Activated T-helper 2 cell treated with anti-CD3 and anti-CD28 coated beads, Interferon-gamma antibody, Interleukin-2, Interleukin-4, amounts not matched to agents 10 μg/mL and 5 μg/mL and 100 μg/mL, durations not matched to agents 14 hours and 24 hours and 36 hours (primary cell): ENCODE measurements at regions of chr2 and their contacts with region 1.

Region 1: GRCh38 chr2:200319548-200320337 is 13.2 kb downstream of the SPATS2L start:
- DNase-seq: no peak
- H3K4me3 Mint-ChIP-seq: no peak overlapping the region
- H3K27ac Mint-ChIP-seq: no peak overlapping the region
- H3K4me1 Mint-ChIP-seq: peaks cover 73% of the 10 kb centered on the region
- H3K27me3 Mint-ChIP-seq: no peaks in the 10 kb centered on the region

Region 2: DNA sequence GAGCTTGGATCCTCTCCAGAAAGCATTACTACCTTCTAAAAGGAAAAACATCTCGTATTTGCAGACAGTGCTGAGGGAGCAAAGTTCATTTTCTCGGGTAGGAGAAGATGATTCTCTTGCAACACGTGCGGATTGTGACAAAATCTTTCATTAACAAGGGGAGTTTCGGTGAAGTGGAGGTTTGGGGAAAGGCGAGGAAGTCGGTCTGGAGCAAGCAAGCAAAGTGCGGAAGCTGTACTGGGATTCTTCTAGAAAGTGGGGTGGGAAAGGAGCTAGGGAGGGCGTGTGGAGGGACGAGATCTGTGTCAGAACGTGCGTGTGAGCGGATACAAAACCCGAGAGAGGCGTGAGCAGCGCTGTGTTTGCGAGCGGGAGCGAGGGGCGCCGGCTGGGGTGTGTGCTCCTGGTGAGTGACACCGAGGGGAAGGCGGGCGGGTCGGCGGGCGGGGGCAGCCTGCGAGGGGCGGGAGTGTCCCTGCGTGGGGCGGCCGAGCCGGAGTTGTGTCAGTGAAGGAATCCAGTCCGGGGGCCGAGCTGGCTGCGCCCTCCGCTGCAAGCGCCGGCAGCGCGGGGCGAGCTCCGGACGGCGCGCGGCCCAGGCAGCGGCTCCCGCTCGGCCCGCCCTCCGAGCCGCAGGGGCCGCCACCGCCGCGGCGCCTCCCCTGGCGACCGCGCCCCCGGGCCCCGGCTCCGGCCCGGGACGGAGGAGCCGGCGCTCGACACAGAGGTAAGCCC is 13.4 kb before region 1 on chr2 and contains the start of gene SPATS2L:
- intact Hi-C with region 1: loop called (anchors 1 kb)
- DNase-seq: peak; percentile 48
- H3K4me3 Mint-ChIP-seq: peak within 1 kb of the TSS; percentile 92
- H3K27ac Mint-ChIP-seq: peak within 1 kb of the TSS; percentile 91
- H3K4me1 Mint-ChIP-seq: peaks cover 40% of the 10 kb centered on the region
- H3K27me3 Mint-ChIP-seq: peaks cover 12% of the 10 kb centered on the region
- total RNA-seq, gene SPATS2L: 57.5 and 62.2 TPM in 2 replicates

Region 3: GRCh38 chr2:200373973-200374416 is 54.3 kb after region 1 on chr2:
- intact Hi-C with region 1: loop called (anchors 1 kb)
- DNase-seq: peak; percentile 33
- H3K4me3 Mint-ChIP-seq: peak overlapping the region; percentile 76
- H3K27ac Mint-ChIP-seq: peak overlapping the region; percentile 74
- H3K4me1 Mint-ChIP-seq: peaks cover 51% of the 10 kb centered on the region
- H3K27me3 Mint-ChIP-seq: no peaks in the 10 kb centered on the region

Region 4: DNA sequence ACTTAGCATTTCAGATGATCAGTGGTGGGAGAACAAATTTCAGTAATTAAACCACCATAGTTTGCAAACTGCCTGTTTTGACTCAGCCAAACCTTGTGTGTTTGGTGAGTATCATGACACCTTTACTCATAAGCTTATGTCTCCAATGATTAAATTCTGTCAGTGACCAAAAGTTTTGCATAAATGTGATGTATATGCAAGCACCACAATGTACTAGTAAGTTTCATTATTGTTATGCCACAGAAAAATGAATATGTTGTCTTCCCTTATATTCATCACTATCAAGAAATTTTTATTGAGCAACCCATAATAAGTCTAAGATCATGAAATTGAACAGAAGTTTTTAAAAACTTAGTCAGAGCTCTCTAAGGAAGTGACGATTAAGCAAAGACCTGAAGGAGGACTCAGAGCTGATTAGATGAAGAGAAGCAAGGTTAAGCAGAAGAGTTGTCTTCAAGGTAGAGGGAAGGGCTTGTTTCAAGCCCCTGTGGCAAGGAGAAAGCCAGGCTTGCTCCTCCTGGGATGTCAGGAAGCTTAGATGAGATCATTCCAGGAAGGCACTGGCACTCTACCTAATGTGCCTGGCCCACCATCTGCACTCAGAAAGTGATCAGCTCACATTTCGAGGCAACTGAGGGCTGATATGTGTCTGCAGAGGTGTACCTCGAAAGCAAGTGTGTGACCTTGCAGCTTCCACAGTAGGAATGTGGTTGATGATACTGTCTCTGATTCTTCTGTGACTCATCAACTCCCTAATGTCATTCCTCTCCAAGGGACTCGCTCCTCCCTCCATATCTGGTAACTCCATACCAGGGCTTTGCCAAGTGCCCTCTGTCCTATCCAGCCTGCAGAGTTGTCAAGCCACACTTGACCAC is 135.4 kb after region 1 on chr2:
- intact Hi-C with region 1: loop called (anchors 1 kb)
- DNase-seq: no peak
- H3K4me3 Mint-ChIP-seq: no peak overlapping the region
- H3K27ac Mint-ChIP-seq: peak overlapping the region; percentile 61
- H3K4me1 Mint-ChIP-seq: peaks cover 33% of the 10 kb centered on the region
- H3K27me3 Mint-ChIP-seq: no peaks in the 10 kb centered on the region

Region 5: GRCh38 chr2:200585730-200586643 is 266.2 kb after region 1 on chr2 and contains the start of gene AOX1:
- intact Hi-C with region 1: no loop called
- DNase-seq: peak; percentile 12
- H3K4me3 Mint-ChIP-seq: peak within 1 kb of the TSS; percentile 67
- H3K27ac Mint-ChIP-seq: no peak within 1 kb of the TSS
- H3K4me1 Mint-ChIP-seq: peaks cover 7% of the 10 kb centered on the region
- H3K27me3 Mint-ChIP-seq: peaks cover 19% of the 10 kb centered on the region
- total RNA-seq, gene AOX1: not detected in 2 replicates

Region 6: DNA sequence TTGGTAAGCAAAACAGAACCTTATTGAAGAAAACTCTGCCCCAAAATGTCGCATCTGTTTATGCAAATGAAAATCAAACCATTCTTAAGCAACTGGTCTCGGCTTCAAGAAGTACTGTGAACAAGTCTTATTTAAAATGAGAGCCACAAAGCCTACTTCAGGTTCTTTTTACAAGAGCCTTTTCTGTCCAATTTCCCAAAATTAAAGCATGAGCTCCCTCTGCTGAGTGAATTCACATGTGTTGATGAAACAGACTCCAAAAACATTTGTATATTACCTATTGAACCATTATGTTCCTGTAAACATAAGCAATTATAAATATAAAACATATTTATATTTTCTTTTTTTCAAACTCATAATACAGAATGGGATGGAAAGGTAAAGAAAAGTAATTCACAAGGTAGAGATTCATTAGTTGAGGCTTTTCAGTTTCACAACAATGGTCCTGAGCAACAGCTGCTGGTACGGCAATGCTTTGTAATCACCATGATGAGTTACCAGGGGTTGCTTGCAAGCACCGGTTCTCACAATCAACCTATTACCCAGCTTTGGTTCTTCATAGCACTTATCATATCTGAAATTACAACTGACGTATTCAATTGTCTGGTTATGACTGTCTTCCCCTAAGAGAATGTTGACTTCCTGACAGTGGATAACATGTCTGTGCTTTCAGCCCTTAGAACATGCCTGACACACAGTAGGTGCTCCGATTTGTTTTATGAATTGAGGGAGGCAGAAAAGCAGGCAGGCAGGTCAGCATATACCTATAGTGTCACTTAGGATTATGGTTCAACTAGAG is 383.6 kb after region 1 on chr2:
- intact Hi-C with region 1: loop called (anchors 5 kb)
- DNase-seq: no peak
- H3K4me3 Mint-ChIP-seq: peak overlapping the region; percentile 6
- H3K27ac Mint-ChIP-seq: peak overlapping the region; percentile 87
- H3K4me1 Mint-ChIP-seq: peaks cover 47% of the 10 kb centered on the region
- H3K27me3 Mint-ChIP-seq: no peaks in the 10 kb centered on the region